ENCODE measurements at regions of chr12 and their contacts with region 1.

Region 1: DNA sequence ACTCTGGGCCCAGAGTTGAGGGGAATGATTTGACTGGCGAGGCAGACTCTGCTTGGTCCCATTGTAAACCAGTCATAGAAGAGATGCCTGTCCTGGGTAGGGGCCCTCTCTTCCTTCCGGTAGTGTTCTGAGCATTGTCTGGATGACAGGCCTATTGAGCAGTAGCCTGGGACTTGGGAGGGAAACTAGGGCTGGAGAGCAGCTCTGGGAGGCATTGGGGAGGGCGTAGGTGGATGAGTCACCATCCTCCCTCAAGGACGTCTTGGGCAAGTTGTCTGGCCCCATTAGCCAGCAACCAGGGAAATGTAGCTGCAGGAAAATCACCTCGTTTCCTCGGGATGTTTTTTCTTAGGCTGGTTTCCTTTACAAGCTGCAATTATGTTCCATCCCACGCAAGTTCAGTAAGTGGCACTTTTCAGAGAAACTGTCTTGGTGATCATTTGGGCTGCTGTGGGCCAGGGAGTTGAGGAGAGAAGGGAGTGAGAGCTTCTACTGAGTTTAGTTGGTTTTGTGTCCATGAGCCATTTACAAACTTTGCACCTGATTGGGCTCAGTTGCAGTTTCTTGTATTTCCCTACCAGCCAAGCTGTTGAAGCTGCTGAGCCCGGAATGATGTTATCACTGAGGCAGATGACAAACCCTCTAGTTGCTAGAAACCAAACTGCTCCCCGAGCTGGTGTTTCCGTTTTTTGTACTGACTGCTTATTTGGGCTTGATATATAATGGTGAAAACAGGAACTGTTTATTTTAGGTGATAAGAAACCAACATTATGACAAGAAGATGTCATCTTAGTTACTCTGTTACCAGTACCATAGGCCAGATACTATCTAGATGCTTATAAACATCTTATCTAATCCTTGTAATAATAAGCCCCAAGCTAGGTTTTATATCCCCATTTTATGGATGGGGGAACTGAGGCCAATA is 147.6 kb downstream of the CHST11 start:
- DNase-seq: peak; percentile 81
- H3K4me3 Mint-ChIP-seq: peak overlapping the region; percentile 19
- H3K27ac Mint-ChIP-seq: peak overlapping the region; percentile 92
- H3K4me1 Mint-ChIP-seq: peaks cover 47% of the 10 kb centered on the region
- H3K27me3 Mint-ChIP-seq: no peaks in the 10 kb centered on the region

Region 2: DNA sequence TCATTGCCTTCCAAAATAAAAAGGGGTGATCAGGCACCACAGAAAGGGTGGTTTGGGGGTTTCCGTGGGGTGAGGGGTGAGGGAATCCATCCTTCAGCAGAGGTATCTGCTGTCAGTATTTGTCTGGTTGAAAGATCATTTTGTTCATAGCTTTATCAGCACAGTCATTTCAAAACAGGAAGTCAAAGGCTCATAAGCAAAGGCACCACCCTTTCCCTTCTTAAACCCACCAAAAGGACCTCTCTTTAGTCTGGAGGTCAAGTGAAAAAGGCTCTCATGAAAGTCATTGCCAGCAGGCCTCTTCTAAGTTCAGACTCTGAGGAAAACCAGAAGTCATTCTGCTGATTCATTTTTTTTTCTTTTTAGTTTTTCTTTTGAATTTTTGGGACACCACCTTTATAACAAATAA is 141.4 kb before region 1 on chr12:
- CTCF ChIA-PET with region 1: interaction called, 14 read pairs
- POLR2A ChIA-PET with region 1: interaction called, 12 read pairs
- intact Hi-C with region 1: loop called (anchors 1 kb)
- DNase-seq: peak; percentile 65
- H3K4me3 Mint-ChIP-seq: peak overlapping the region; percentile 67
- H3K27ac Mint-ChIP-seq: peak overlapping the region; percentile 98
- H3K4me1 Mint-ChIP-seq: peaks cover 76% of the 10 kb centered on the region
- H3K27me3 Mint-ChIP-seq: no peaks in the 10 kb centered on the region

Region 3: GRCh38 chr12:104569346-104570173 is 34.8 kb before region 1 on chr12:
- CTCF ChIA-PET with region 1: no interaction called
- POLR2A ChIA-PET with region 1: interaction called, 4 read pairs
- intact Hi-C with region 1: loop called (anchors 2 kb)
- DNase-seq: peak; percentile 70
- H3K4me3 Mint-ChIP-seq: peak overlapping the region; percentile 1
- H3K27ac Mint-ChIP-seq: peak overlapping the region; percentile 46
- H3K4me1 Mint-ChIP-seq: peaks cover 62% of the 10 kb centered on the region
- H3K27me3 Mint-ChIP-seq: no peaks in the 10 kb centered on the region

Region 4: GRCh38 chr12:104578453-104578852 is 25.9 kb before region 1 on chr12:
- CTCF ChIA-PET with region 1: no interaction called
- POLR2A ChIA-PET with region 1: no interaction called
- intact Hi-C with region 1: loop called (anchors 1 kb)
- DNase-seq: peak; percentile 72
- H3K4me3 Mint-ChIP-seq: no peak overlapping the region
- H3K27ac Mint-ChIP-seq: no peak overlapping the region
- H3K4me1 Mint-ChIP-seq: peaks cover 75% of the 10 kb centered on the region
- H3K27me3 Mint-ChIP-seq: no peaks in the 10 kb centered on the region

Region 5: GRCh38 chr12:104620837-104621531 is 16.7 kb after region 1 on chr12:
- CTCF ChIA-PET with region 1: no interaction called
- POLR2A ChIA-PET with region 1: no interaction called
- intact Hi-C with region 1: no loop called
- DNase-seq: no peak
- H3K4me3 Mint-ChIP-seq: no peak overlapping the region
- H3K27ac Mint-ChIP-seq: no peak overlapping the region
- H3K4me1 Mint-ChIP-seq: peaks cover 27% of the 10 kb centered on the region
- H3K27me3 Mint-ChIP-seq: no peaks in the 10 kb centered on the region